CD8-positive, alpha-beta T cell (primary cell): ENCODE measurements at regions of chr17 and their contacts with region 1.

Region 1: GRCh38 chr17:76737082-76737675 is at the start of gene SRSF2:
- DNase-seq: peak; percentile 96 to 99 (median 98)
- ATAC-seq: peak; percentile 79
- H3K4me3 ChIP-seq: peak within 1 kb of the TSS; percentile 88 to 100
- H3K4me3 Mint-ChIP-seq: peak within 1 kb of the TSS; percentile 96
- H3K27ac ChIP-seq: peak within 1 kb of the TSS; percentile 93 to 99
- H3K27ac Mint-ChIP-seq: peak within 1 kb of the TSS; percentile 97
- H3K4me1 ChIP-seq: peaks cover 44% of the 10 kb centered on the region
- H3K4me1 Mint-ChIP-seq: peaks cover 59% of the 10 kb centered on the region
- H3K27me3 ChIP-seq: no peaks in the 10 kb centered on the region
- H3K27me3 Mint-ChIP-seq: no peaks in the 10 kb centered on the region
- CTCF ChIP-seq: no peak
- total RNA-seq, gene SRSF2: 621 to 637 TPM

Region 2: DNA sequence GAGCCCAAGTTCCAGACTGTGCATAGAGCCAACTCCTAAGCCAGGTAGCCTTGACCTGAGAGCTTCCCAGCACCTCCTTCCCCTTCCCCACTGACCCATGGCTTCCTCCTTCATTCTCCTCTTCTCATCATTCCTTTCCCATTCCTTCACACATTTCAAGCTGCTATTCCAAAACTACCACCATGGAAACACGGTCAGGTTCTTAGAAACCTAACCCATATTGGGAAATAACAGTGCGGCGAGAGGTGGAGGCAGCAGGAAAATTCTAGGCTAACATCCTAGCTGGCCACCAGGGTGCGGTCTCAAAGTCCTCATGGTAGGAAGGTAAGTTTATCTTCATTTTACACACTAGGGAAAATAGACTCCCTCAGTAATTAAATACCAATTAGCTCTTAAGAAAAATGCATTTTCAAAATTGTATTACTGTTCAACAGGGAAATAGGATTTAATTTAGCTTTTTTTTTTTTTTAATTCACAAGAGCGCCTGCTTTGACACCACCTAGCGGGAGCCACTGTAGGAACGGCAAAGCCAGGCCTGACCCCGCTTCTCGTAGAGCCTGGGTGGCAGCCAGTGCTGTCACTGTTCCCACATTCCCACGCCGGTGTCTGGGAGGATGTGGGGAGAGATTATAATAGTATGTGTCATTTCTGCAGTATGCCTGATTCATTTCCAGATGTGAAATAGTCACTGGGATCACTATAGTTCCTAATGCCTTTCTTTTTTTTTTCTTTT is 366.8 kb before region 1 on chr17:
- CTCF ChIA-PET with region 1: no interaction called
- POLR2A ChIA-PET with region 1: no interaction called
- intact Hi-C with region 1: no loop called
- DNase-seq: no peak
- ATAC-seq: no peak
- H3K4me3 ChIP-seq: no peak overlapping the region
- H3K4me3 Mint-ChIP-seq: no peak overlapping the region
- H3K27ac ChIP-seq: no peak overlapping the region
- H3K27ac Mint-ChIP-seq: no peak overlapping the region
- H3K4me1 ChIP-seq: no peaks in the 10 kb centered on the region
- H3K4me1 Mint-ChIP-seq: no peaks in the 10 kb centered on the region
- H3K27me3 ChIP-seq: no peaks in the 10 kb centered on the region
- H3K27me3 Mint-ChIP-seq: no peaks in the 10 kb centered on the region
- CTCF ChIP-seq: no peak

Region 3: GRCh38 chr17:76557368-76558197 is 179.6 kb before region 1 on chr17:
- CTCF ChIA-PET with region 1: interaction called, 3 read pairs
- POLR2A ChIA-PET with region 1: interaction called, 6 read pairs
- intact Hi-C with region 1: loop called in 1 of 2 experiments (anchors 5 kb)
- DNase-seq: peak; percentile 86 to 97 (median 92)
- ATAC-seq: peak; percentile 78
- H3K4me3 ChIP-seq: peak overlapping the region; percentile 70 to 75
- H3K4me3 Mint-ChIP-seq: peak overlapping the region; percentile 95
- H3K27ac ChIP-seq: peak overlapping the region; percentile 81 to 95
- H3K27ac Mint-ChIP-seq: peak overlapping the region; percentile 97
- H3K4me1 ChIP-seq: peaks cover 49% of the 10 kb centered on the region
- H3K4me1 Mint-ChIP-seq: peaks cover 63% of the 10 kb centered on the region
- H3K27me3 ChIP-seq: no peaks in the 10 kb centered on the region
- H3K27me3 Mint-ChIP-seq: no peaks in the 10 kb centered on the region
- CTCF ChIP-seq: peak; percentile 35

Region 4: DNA sequence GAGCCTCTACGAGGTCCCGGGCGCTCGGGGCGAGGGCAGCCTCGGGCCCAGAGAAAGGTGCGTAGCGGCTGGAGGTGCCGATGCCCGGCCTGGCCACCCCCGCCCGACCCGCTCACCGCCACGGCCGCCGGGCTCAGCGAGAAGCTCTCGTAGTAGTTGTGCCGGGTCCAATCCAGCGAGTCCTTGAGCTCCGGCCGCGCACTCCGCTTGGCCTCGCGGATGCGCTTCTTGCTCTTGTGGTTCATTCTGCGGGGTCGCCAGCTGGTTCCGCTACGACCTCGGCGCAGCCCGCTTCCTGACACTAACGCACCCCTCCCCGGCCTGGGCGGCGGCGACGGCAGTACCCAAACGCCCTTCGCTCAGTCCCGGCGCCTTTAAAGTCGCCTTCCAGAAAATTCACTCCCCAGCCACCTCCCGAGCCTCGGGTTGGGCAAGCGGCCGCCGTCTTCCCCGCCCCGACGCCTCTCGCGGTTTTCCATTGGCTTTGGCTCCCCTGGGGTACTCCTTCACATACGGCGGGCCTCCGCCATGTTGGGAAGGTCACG is 10.9 kb before region 1 on chr17 and contains the start of gene JMJD6:
- CTCF ChIA-PET with region 1: interaction called, 14 read pairs
- POLR2A ChIA-PET with region 1: interaction called, 80 read pairs
- intact Hi-C with region 1: loop called (anchors 1 kb)
- DNase-seq: peak in 5 of 9 experiments; percentile 88 to 95 (median 93)
- ATAC-seq: peak; percentile 77
- H3K4me3 ChIP-seq: peak within 1 kb of the TSS; percentile 87 to 92
- H3K4me3 Mint-ChIP-seq: peak within 1 kb of the TSS; percentile 99
- H3K27ac ChIP-seq: peak within 1 kb of the TSS; percentile 98 to 99
- H3K27ac Mint-ChIP-seq: peak within 1 kb of the TSS; percentile 99
- H3K4me1 ChIP-seq: peaks cover 46% of the 10 kb centered on the region
- H3K4me1 Mint-ChIP-seq: peaks cover 57% of the 10 kb centered on the region
- H3K27me3 ChIP-seq: no peaks in the 10 kb centered on the region
- H3K27me3 Mint-ChIP-seq: no peaks in the 10 kb centered on the region
- CTCF ChIP-seq: no peak
- total RNA-seq, gene JMJD6: 316 to 336 TPM

Region 5: DNA sequence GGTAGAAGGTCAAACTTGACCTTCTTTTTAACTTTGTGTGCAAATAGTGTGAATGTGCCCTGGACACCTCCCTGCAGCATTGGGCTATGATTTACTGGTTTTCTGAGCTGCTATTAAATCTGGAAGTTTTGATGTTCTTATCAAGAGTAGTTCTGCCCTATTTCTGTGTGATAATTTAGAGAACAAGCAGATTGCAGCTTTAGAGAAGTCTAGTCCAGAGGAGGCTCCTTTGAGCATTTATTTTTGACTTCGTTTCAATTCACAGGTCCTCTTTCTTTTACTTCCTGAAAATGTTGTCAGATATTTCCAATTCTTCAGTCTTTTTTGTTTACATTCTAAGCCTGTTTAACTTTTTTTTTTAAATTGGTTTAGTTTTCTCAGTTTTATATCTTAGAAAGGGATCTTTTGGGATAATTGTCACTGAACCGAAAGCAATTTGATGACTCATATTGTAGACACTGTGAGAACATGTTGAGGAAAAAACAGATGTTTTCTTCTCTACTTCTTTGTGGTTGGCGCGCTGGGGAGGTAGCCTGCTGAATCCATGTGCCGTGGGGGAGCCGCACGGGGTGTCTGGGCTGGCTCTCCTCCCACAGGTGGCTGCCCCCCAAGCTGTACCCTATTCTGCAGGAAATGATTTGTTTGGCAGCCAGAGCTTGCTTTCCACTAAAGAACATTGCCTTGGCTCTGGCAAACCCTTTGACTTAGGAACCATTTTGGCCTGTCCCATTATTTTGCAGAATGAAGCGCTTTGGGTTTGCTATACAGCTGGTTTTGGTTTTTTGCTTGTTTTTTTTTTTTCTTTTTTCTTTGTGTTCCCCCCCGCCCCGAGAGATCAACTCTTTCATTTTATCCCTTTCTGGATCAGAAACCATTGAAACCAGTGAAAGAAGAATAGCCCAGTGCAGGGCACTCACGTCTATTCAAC is 54.1 kb after region 1 on chr17:
- CTCF ChIA-PET with region 1: no interaction called
- POLR2A ChIA-PET with region 1: no interaction called
- intact Hi-C with region 1: no loop called
- DNase-seq: peak in 7 of 9 experiments; percentile 17 to 68 (median 52)
- ATAC-seq: peak; percentile 84
- H3K4me3 ChIP-seq: no peak overlapping the region
- H3K4me3 Mint-ChIP-seq: peak overlapping the region; percentile 43
- H3K27ac ChIP-seq: peak overlapping the region in 1 of 2 experiments; percentile 17
- H3K27ac Mint-ChIP-seq: peak overlapping the region; percentile 74
- H3K4me1 ChIP-seq: peaks cover 11% of the 10 kb centered on the region
- H3K4me1 Mint-ChIP-seq: peaks cover 11% of the 10 kb centered on the region
- H3K27me3 ChIP-seq: no peaks in the 10 kb centered on the region
- H3K27me3 Mint-ChIP-seq: no peaks in the 10 kb centered on the region
- CTCF ChIP-seq: no peak

Region 6: GRCh38 chr17:76884971-76885893 is 148.1 kb after region 1 on chr17:
- CTCF ChIA-PET with region 1: no interaction called
- POLR2A ChIA-PET with region 1: no interaction called
- intact Hi-C with region 1: no loop called
- DNase-seq: no peak
- ATAC-seq: no peak
- H3K4me3 ChIP-seq: no peak overlapping the region
- H3K4me3 Mint-ChIP-seq: no peak overlapping the region
- H3K27ac ChIP-seq: no peak overlapping the region
- H3K27ac Mint-ChIP-seq: no peak overlapping the region
- H3K4me1 ChIP-seq: no peaks in the 10 kb centered on the region
- H3K4me1 Mint-ChIP-seq: no peaks in the 10 kb centered on the region
- H3K27me3 ChIP-seq: no peaks in the 10 kb centered on the region
- H3K27me3 Mint-ChIP-seq: no peaks in the 10 kb centered on the region
- CTCF ChIP-seq: no peak

Region 7: DNA sequence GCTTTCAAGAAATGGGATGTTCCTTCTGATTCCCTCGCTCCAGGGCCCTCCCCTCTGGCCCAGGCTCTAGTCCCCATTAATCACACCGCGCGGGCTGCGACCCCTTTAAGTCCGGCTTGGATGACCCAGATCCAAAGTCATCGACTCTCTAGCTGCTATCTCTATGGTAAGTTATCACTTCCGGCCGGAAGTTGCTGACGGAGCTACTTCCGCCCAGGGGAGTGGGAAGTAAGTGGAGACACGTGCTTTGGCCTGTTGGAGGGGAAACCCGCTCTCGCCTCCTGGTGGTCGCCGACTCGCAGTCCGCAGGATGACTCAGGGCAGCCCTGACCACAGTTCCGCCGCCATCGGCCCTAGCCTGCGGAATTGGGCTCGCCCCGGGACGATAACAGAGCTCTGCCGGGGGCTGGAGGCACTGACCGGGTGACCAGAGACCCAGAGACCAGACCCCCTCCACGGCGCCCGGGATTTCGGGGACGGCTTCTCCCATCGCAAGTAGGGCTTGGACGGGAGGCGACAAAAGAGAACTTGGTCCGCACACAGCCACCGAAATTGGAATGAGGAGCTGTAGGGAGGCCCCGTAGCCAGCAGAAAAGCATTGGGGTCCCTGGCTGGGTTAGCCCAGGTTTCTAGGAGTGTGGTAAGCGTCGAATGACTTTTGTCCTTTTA is 351.4 kb after region 1 on chr17:
- CTCF ChIA-PET with region 1: no interaction called
- POLR2A ChIA-PET with region 1: no interaction called
- intact Hi-C with region 1: loop called in 1 of 2 experiments (anchors 2 kb)
- DNase-seq: peak; percentile 73 to 96 (median 86)
- ATAC-seq: peak; percentile 82
- H3K4me3 ChIP-seq: peak overlapping the region; percentile 55 to 96
- H3K4me3 Mint-ChIP-seq: peak overlapping the region; percentile 98
- H3K27ac ChIP-seq: peak overlapping the region; percentile 81 to 93
- H3K27ac Mint-ChIP-seq: peak overlapping the region; percentile 99
- H3K4me1 ChIP-seq: peaks cover 37% of the 10 kb centered on the region
- H3K4me1 Mint-ChIP-seq: peaks cover 48% of the 10 kb centered on the region
- H3K27me3 ChIP-seq: no peaks in the 10 kb centered on the region
- H3K27me3 Mint-ChIP-seq: peaks cover 2% of the 10 kb centered on the region
- CTCF ChIP-seq: peak; percentile 64

Region 8: GRCh38 chr17:77451245-77451893 is 714.2 kb after region 1 on chr17:
- CTCF ChIA-PET with region 1: no interaction called
- POLR2A ChIA-PET with region 1: no interaction called
- intact Hi-C with region 1: loop called (anchors 10 kb)
- DNase-seq: peak; percentile 36 to 86 (median 73)
- ATAC-seq: peak; percentile 25
- H3K4me3 ChIP-seq: peak overlapping the region; percentile 93 to 99
- H3K4me3 Mint-ChIP-seq: peak overlapping the region; percentile 94
- H3K27ac ChIP-seq: peak overlapping the region; percentile 80 to 86
- H3K27ac Mint-ChIP-seq: peak overlapping the region; percentile 100
- H3K4me1 ChIP-seq: peaks cover 54% of the 10 kb centered on the region
- H3K4me1 Mint-ChIP-seq: peaks cover 50% of the 10 kb centered on the region
- H3K27me3 ChIP-seq: no peaks in the 10 kb centered on the region
- H3K27me3 Mint-ChIP-seq: no peaks in the 10 kb centered on the region
- CTCF ChIP-seq: no peak